ENCODE measurements at regions of chr6 and their contacts with region 1.

Region 1: DNA sequence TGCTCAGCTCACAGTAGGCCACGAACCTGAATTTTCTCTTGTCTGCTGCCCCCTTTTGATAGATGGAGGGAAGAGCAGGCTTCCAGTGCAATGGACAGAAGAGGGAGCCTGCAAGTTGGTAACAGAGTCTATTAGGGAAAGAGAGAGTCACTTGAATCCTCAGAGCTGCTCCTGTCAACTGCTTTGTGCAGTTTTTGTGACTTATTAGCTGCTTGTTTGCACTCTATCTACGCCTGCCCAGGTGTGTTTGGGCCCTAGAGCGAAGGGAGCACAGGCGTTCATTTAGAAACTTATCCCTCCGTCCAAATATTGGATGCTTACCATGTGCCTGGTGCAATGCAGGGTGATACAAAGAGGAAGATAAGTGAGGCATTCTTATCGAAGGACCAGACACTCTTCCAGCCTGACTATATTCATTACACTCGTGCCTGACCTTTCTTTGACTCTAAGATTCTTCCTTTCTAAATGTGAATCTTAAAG is 11.6 kb upstream of the SLC2A12 start:
- DNase-seq: peak; percentile 22 to 78
- ATAC-seq: peak; percentile 77 to 98 (median 92)
- H3K4me3 ChIP-seq: no peak overlapping the region
- H3K4me3 Mint-ChIP-seq: no peak overlapping the region
- H3K27ac ChIP-seq: no peak overlapping the region
- H3K27ac Mint-ChIP-seq: no peak overlapping the region
- H3K4me1 ChIP-seq: no peaks in the 10 kb centered on the region
- H3K4me1 Mint-ChIP-seq: no peaks in the 10 kb centered on the region
- H3K27me3 ChIP-seq: no peaks in the 10 kb centered on the region
- H3K27me3 Mint-ChIP-seq: peaks cover 0 to 7% of the 10 kb centered on the region in 2 donors
- CTCF ChIP-seq: peak; percentile 73

Region 2: GRCh38 chr6:133923938-133924593 is 139.9 kb before region 1 on chr6:
- intact Hi-C with region 1: loop called (anchors 1 kb)
- DNase-seq: peak in 1 of 2 donors; percentile 84
- ATAC-seq: peak; percentile 75 to 93 (median 88)
- H3K4me3 ChIP-seq: no peak overlapping the region
- H3K4me3 Mint-ChIP-seq: no peak overlapping the region
- H3K27ac ChIP-seq: no peak overlapping the region
- H3K27ac Mint-ChIP-seq: no peak overlapping the region
- H3K4me1 ChIP-seq: no peaks in the 10 kb centered on the region
- H3K4me1 Mint-ChIP-seq: no peaks in the 10 kb centered on the region
- H3K27me3 ChIP-seq: peaks cover 14% of the 10 kb centered on the region
- H3K27me3 Mint-ChIP-seq: peaks cover 22 to 49% of the 10 kb centered on the region in 2 donors
- CTCF ChIP-seq: peak; percentile 87

Region 3: DNA sequence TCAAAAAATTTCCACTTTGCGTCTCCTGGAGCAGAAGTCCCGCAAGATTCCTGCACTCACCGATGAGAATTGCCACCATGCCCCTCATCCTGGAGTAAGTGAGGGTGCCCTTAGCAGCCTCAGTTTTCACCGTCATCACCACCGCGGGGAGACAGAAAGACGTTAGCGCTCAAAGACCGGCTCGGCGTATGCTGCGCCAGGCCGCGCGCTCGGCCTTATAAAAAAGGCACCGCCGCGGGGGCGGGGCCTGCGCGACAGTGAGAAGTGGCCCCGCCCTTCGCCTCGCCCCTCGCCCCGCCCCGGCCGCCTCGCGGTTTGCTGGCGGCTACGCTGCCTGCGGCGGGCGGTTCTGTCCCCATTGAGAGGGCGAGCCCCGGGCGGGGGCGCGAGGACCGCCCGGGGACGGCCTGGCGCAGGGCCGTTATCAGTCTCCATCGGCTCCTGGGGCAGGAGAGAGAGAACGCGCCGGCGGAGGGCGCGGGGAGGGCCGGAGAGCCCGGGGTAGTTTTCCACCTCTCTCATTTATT is 110.7 kb after region 1 on chr6:
- intact Hi-C with region 1: no loop called
- DNase-seq: peak; percentile 84 to 95
- ATAC-seq: peak; percentile 83 to 91 (median 85)
- H3K4me3 ChIP-seq: peak overlapping the region; percentile 55
- H3K4me3 Mint-ChIP-seq: peak overlapping the region; percentile 94
- H3K27ac ChIP-seq: peak overlapping the region; percentile 81
- H3K27ac Mint-ChIP-seq: peak overlapping the region; percentile 83 to 87
- H3K4me1 ChIP-seq: peaks cover 35% of the 10 kb centered on the region
- H3K4me1 Mint-ChIP-seq: peaks cover 36 to 38% of the 10 kb centered on the region in 2 donors
- H3K27me3 ChIP-seq: no peaks in the 10 kb centered on the region
- H3K27me3 Mint-ChIP-seq: peaks cover 8 to 22% of the 10 kb centered on the region in 2 donors
- CTCF ChIP-seq: no peak

Measured in natural killer cell (primary cell).